Endothelial cell of umbilical vein (primary cell): ENCODE measurements at regions of chr17 and their contacts with region 1.

Region 1: GRCh38 chr17:67390646-67391384 is 13.7 kb downstream of the PITPNC1 start:
- DNase-seq: peak; percentile 93
- H3K4me3 ChIP-seq: no peak overlapping the region
- H3K27ac ChIP-seq: peak overlapping the region; percentile 59
- H3K4me1 ChIP-seq: peaks cover 12% of the 10 kb centered on the region
- H3K27me3 ChIP-seq: no peaks in the 10 kb centered on the region
- CTCF ChIP-seq: no peak
- POLR2A ChIP-seq: no peak

Region 2: DNA sequence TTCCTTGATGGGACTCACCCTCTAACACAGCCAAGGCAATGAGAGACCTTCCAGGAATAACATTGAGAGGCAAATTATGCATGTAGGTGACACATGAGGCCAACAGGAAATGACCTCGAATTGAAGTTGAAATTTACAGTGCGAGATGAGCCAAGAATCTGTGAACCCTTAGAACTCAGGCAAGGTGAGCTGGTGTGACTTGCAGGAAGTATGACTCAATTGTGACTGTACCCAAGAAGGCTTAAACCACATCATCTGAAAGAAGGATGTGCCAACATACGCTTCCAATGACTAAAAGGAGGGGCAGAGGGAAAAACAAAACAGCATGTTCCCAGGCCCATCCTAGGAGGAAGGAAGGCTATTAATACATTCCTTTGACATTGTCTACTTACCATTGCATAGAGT is 31.1 kb after region 1 on chr17:
- CTCF ChIA-PET with region 1: interaction called, 3 read pairs
- POLR2A ChIA-PET with region 1: no interaction called
- dilution Hi-C with region 1: no loop called
- intact Hi-C with region 1: loop called (anchors 1 kb)
- DNase-seq: peak; percentile 81
- H3K4me3 ChIP-seq: no peak overlapping the region
- H3K27ac ChIP-seq: peak overlapping the region; percentile 59
- H3K4me1 ChIP-seq: peaks cover 17% of the 10 kb centered on the region
- H3K27me3 ChIP-seq: no peaks in the 10 kb centered on the region
- CTCF ChIP-seq: no peak
- POLR2A ChIP-seq: no peak

Region 3: GRCh38 chr17:67559377-67559966 is 168.7 kb after region 1 on chr17:
- CTCF ChIA-PET with region 1: no interaction called
- POLR2A ChIA-PET with region 1: no interaction called
- dilution Hi-C with region 1: no loop called
- intact Hi-C with region 1: no loop called
- DNase-seq: no peak
- H3K4me3 ChIP-seq: no peak overlapping the region
- H3K27ac ChIP-seq: no peak overlapping the region
- H3K4me1 ChIP-seq: no peaks in the 10 kb centered on the region
- H3K27me3 ChIP-seq: no peaks in the 10 kb centered on the region
- CTCF ChIP-seq: peak; percentile 10 to 13
- POLR2A ChIP-seq: no peak

Region 4: GRCh38 chr17:67629971-67630320 is 239.1 kb after region 1 on chr17:
- CTCF ChIA-PET with region 1: no interaction called
- POLR2A ChIA-PET with region 1: no interaction called
- dilution Hi-C with region 1: no loop called
- intact Hi-C with region 1: no loop called
- DNase-seq: peak; percentile 33
- H3K4me3 ChIP-seq: no peak overlapping the region
- H3K27ac ChIP-seq: no peak overlapping the region
- H3K4me1 ChIP-seq: peaks cover 13% of the 10 kb centered on the region
- H3K27me3 ChIP-seq: no peaks in the 10 kb centered on the region
- CTCF ChIP-seq: peak in 1 of 2 donors; percentile 28
- POLR2A ChIP-seq: no peak